Heart right ventricle (tissue), 16 donors: ENCODE measurements at regions of chr12 and their contacts with region 1.

Region 1: DNA sequence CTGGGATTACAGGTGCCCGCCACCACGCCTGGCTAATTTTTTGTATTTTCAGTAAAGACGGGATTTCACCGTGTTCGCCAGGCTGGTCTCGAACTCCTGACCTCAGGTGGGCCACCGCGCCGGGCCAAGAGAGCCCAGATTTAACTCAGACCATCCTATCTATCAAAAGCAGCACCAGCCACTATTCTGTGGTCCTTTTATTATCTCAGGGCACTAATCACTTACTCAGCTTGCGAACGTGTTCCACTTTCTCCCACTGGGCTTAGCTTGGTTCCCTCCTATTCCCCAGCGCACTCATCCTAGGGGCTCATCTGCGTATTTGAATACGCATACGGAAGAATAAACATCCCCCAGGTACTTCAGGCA is 16.2 kb upstream of the AACS start:
- DNase-seq: no peak
- ATAC-seq: peak in 2 of 8 donors; percentile 43 to 51
- H3K4me3 ChIP-seq: peak overlapping the region; percentile 33 to 66 (median 62)
- H3K27ac ChIP-seq: peak overlapping the region in 9 of 10 donors; percentile 34 to 75 (median 68)
- H3K4me1 ChIP-seq: peaks cover 0 to 12% (median 7%) of the 10 kb centered on the region in 9 donors
- H3K27me3 ChIP-seq: no peaks in the 10 kb centered on the region
- CTCF ChIP-seq: no peak

Region 2: DNA sequence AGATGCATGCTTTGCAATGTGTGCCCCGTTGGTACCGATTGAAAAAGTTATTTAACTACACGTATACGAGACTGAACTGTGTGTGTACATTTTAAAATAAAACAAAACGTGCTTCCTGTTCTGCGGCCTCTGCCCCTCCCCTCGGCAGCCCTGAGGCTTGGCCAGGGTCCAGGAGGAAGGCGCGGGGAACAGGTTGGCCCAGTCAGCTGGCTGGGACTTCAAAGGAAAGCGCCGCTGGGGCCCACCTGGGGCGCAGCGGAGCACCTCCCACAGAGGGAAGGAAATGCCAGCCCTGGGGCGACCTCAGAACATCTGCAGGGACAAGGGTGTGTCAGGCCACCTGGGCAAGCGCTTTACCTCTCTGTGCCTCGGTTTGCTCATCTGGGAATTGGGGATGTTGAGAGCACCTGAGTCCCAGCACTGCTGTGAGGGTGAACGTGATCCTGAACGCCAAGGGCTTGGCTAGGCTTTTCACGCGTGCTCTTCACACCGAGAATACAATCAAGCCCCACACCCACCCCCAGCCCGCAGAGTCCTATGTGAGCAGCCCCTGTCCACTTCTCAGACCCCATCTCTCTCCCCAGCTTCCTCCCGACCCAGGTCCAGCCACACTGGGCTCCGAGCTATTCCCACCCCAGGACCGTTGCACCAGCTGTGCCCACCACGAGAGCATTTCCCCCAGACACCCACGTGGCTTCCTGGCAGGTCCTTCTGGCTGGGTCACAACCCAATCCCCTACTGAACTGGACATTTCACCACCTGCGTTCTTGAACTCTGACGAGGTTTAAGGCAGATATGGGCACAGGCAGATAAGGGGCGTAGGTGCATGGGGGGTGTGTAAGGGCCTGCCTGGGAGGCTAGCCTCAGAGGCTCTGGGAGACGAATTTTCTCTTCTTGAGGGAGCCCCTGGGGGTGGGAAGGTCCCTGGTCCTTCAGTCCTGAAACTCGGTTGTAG is 439.8 kb before region 1 on chr12:
- intact Hi-C with region 1: no loop called
- DNase-seq: peak; percentile 79 to 83
- ATAC-seq: peak; percentile 13 to 89 (median 76)
- H3K4me3 ChIP-seq: peak overlapping the region in 1 of 10 donors; percentile 14
- H3K27ac ChIP-seq: peak overlapping the region in 1 of 10 donors; percentile 10
- H3K4me1 ChIP-seq: peaks cover 0 to 35% (median 13%) of the 10 kb centered on the region in 9 donors
- H3K27me3 ChIP-seq: peaks cover 0 to 6% (median 0%) of the 10 kb centered on the region in 7 donors
- CTCF ChIP-seq: no peak

Region 3: DNA sequence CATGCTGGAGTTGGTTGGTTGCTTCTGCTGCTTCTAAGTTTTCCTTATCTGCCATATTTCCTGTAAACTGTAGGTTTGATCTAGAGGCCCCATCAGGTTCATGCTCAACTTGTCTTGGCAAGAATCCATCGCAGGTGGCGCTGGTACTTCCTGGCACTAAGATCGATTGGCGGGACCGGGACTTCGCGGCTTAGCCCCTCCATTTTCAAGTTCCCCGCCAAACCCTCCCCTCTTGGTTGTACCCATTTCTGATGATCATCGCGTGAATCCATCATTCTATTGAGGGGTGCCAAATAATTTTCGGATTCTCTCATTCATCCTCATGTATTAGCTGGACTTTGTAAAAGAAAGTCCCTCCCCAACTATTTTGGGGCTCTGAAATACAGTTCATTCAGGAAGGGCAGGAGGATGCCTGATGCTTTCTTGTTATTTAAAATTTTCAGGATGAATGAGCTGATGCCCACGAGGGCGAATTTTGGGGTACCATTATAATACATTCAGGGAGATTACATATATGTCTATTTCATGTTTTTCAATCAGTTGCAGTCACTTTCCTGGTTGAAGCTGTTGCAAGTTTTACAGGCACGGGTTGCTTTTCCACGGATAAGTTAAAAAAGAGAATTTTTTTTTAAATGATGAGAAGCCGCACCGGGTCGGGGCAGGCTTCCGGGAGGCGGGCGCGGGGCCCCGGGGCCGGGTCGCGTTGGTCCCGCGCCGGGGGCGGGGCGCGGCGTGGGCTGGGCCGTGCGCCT is 56.0 kb before region 1 on chr12:
- intact Hi-C with region 1: loop called in 2 of 10 experiments (anchors 5 to 10 kb)
- DNase-seq: peak; percentile 32 to 74
- ATAC-seq: peak in 7 of 8 donors; percentile 56 to 78 (median 66)
- H3K4me3 ChIP-seq: peak overlapping the region in 9 of 10 donors; percentile 32 to 65 (median 58)
- H3K27ac ChIP-seq: peak overlapping the region in 2 of 10 donors; percentile 8 to 46
- H3K4me1 ChIP-seq: peaks cover 0 to 47% (median 23%) of the 10 kb centered on the region in 9 donors
- H3K27me3 ChIP-seq: no peaks in the 10 kb centered on the region
- CTCF ChIP-seq: peak in 2 of 9 donors; percentile 4 to 30

Region 4: GRCh38 chr12:125065021-125065795 is 16.1 kb after region 1 on chr12 and contains the start of gene AACS:
- intact Hi-C with region 1: loop called in 3 of 10 experiments (anchors 1 to 2 kb)
- DNase-seq: peak; percentile 77 to 83
- ATAC-seq: peak; percentile 90 to 98 (median 94)
- H3K4me3 ChIP-seq: peak within 1 kb of the TSS; percentile 59 to 93 (median 84)
- H3K27ac ChIP-seq: peak within 1 kb of the TSS in 9 of 10 donors; percentile 45 to 80 (median 71)
- H3K4me1 ChIP-seq: peaks cover 4 to 29% (median 19%) of the 10 kb centered on the region in 9 donors
- H3K27me3 ChIP-seq: peaks cover 0 to 18% (median 0%) of the 10 kb centered on the region in 7 donors
- CTCF ChIP-seq: peak in 2 of 9 donors; percentile 3 to 26
- total RNA-seq, gene AACS: 8.5 to 19.4 (median 12.6) TPM

Region 5: GRCh38 chr12:125149160-125150108 is 100.4 kb after region 1 on chr12:
- intact Hi-C with region 1: no loop called
- DNase-seq: no peak
- ATAC-seq: no peak
- H3K4me3 ChIP-seq: no peak overlapping the region
- H3K27ac ChIP-seq: no peak overlapping the region
- H3K4me1 ChIP-seq: no peaks in the 10 kb centered on the region
- H3K27me3 ChIP-seq: no peaks in the 10 kb centered on the region
- CTCF ChIP-seq: no peak

Region 6: DNA sequence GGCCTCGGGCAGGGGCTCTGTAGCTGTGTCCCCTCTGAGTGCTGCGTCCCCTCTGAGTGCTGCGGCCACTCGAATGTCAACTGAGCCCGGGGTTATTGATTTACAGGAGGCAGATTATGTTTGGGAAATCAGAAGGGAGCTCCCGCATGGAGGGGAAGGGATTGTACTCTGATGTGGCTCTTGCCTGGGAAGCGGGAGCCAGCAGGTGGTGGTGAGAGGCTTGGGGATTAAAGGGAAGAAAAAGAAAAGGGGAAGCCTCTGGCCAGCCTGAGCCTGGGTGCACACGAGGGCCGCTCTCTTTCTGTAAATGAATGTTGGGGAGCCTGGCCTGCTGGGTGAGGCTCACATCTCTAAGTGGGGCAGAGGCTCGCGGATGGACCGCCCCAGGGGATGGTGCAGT is 159.9 kb after region 1 on chr12:
- intact Hi-C with region 1: no loop called
- DNase-seq: no peak
- ATAC-seq: no peak
- H3K4me3 ChIP-seq: no peak overlapping the region
- H3K27ac ChIP-seq: no peak overlapping the region
- H3K4me1 ChIP-seq: no peaks in the 10 kb centered on the region
- H3K27me3 ChIP-seq: peaks cover 0 to 60% (median 21%) of the 10 kb centered on the region in 7 donors
- CTCF ChIP-seq: no peak